A549 (cell line): ENCODE measurements at regions of chr16 and their contacts with region 1.

Region 1: DNA sequence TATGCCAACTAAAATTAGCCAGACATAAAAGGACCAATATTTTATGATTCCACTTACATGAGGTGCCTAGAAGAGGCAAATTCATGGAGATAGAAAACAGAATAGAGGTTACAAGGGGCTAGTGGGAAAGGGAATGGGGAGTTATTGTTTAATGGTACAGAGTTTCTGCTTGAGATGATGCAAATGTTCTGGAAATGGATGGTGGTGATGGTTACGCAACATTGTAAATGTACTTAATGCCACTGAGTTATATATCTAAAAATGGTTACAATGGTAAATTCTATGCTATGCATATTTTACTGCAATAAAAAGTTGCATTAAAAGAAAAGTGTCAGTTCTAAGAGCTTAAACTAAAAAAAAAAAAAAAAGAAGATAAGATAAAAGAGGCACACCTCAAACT is 17.9 kb downstream of the MT1X start:
- DNase-seq: no peak
- ATAC-seq: no peak
- H3K4me3 ChIP-seq: no peak overlapping the region
- H3K27ac ChIP-seq: no peak overlapping the region; a peak in 1 of 6 replicates
- H3K4me1 ChIP-seq: peaks cover 2% of the 10 kb centered on the region; the same call in 1 of the 3 replicates
- CTCF ChIP-seq: no peak
- EP300 ChIP-seq: no peak
- POLR2A ChIP-seq: no peak
- RAD21 ChIP-seq: no peak

Region 2: DNA sequence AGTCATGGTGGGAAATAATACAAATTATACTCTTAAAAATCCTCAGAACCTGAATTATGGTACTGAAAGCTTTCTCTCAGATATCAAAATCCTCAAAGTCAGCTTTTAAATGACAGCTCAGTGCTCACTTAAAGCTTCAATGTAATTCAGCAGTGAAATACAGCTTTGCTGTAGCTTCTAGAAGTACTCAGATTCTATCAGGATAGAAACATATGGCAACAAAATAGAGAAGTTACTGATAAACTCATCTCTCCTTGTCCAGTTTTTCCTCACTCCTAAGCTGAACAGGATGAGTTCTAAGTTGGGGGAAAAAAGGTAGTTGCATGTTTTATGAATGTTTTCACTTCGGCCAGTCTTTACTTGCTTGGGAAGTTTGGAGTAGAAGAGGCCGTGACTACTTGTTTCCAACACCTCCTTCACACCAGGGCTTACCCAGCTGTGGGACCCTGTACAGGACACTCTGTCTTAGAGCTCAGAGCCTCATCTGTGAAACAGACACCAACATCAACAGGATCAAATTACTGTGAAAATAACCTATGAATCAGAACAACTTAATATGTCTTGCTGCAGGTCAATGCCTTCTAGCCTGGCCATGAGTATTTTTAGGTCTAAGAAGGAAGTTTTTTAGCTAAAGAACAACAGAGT is 218.6 kb before region 1 on chr16:
- CTCF ChIA-PET with region 1: interaction called, 11 read pairs
- POLR2A ChIA-PET with region 1: no interaction called
- DNase-seq: no peak
- ATAC-seq: no peak
- H3K4me3 ChIP-seq: no peak overlapping the region
- H3K27ac ChIP-seq: no peak overlapping the region
- H3K4me1 ChIP-seq: peaks cover 13% of the 10 kb centered on the region; the same call in 2 of the 3 replicates
- CTCF ChIP-seq: no peak
- EP300 ChIP-seq: no peak
- POLR2A ChIP-seq: no peak
- RAD21 ChIP-seq: no peak

Region 3: DNA sequence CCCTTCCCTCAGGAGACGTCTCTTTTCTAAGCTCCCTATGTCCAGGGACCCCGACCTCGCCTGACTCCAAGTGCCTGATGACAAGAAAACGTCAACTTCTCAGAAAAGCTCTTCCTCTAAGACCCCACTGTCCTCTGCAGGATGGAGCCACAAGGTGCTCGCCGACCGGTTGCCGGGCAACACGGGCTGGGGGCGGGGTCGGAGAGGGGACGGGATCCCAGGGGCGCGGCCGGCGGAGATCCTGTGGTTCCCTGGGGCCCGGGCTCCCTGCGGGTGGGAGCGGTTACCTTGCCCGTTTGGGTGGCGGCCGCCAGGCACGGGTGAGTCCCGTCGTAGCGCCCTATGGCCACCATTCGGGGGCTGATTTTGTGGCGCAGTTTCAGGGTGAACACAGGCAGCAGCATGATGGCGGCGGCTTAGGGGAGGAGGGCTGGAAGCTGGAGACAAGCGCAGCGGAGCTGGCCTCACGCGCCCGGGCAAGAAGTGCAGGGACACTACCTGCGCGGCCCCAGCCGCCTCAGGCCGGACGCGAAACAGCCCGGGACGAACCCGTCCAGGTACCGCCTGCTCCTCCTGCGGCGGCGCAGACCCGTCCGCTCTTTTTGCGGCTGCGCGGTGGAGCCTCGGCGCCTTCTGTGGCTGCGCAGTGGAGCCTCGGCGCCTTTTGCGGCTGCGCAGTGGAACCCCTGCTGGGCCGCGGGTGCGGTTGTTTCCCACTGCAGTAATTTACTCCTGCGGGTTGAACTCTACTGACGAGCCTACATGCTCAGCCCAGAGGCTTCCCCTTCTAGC is 180.5 kb before region 1 on chr16 and contains the start of gene BBS2:
- CTCF ChIA-PET with region 1: interaction called, 44 read pairs
- POLR2A ChIA-PET with region 1: no interaction called
- DNase-seq: peak; percentile 84 to 86
- ATAC-seq: peak; percentile 94 to 98
- H3K4me3 ChIP-seq: peak within 1 kb of the TSS; percentile 79
- H3K27ac ChIP-seq: peak within 1 kb of the TSS; percentile 91 to 95
- H3K4me1 ChIP-seq: peaks cover 14% of the 10 kb centered on the region; the same call in 2 of the 3 replicates
- CTCF ChIP-seq: no peak
- EP300 ChIP-seq: no peak
- POLR2A ChIP-seq: peak; percentile 92
- RAD21 ChIP-seq: no peak
- polyA plus RNA-seq, gene BBS2: 61.4 and 62.3 TPM in 2 replicates

Region 4: DNA sequence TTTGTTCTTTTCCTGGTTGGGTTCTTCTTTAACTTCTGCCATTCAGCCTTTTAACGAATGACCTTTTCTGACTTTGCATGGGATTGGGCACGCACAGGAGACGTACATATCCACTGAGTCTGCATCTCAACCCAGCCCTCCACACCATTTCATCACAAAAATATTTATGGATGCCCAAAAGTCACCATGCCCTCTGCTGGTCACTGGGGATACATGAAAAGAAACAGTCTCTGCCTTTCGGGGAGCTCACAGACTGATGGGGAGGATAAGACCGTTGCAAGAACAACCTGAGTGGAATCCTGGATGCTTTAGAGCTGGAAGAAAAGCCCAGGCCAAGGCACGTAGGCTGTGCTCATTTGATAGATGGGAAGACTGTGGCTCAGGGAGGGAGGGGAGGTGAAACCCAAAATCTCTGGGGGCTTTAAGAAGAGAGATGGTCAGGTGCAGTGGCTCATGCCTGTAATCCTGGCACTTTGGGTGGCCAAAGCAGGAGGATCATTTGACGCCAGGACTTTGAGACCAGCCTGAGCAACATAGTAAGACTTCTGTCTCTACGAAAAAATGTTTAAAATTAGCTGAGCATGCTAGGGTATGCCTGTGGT is 99.7 kb before region 1 on chr16:
- CTCF ChIA-PET with region 1: interaction called, 104 read pairs
- POLR2A ChIA-PET with region 1: interaction called, 6 read pairs
- DNase-seq: peak; percentile 69 to 87
- ATAC-seq: peak; percentile 84 to 87
- H3K4me3 ChIP-seq: no peak overlapping the region
- H3K27ac ChIP-seq: peak overlapping the region; percentile 34 to 61; a peak in 4 of 6 replicates
- H3K4me1 ChIP-seq: peaks cover 12% of the 10 kb centered on the region
- CTCF ChIP-seq: peak; percentile 74
- EP300 ChIP-seq: no peak
- POLR2A ChIP-seq: no peak
- RAD21 ChIP-seq: peak; percentile 68 to 69

Region 5: DNA sequence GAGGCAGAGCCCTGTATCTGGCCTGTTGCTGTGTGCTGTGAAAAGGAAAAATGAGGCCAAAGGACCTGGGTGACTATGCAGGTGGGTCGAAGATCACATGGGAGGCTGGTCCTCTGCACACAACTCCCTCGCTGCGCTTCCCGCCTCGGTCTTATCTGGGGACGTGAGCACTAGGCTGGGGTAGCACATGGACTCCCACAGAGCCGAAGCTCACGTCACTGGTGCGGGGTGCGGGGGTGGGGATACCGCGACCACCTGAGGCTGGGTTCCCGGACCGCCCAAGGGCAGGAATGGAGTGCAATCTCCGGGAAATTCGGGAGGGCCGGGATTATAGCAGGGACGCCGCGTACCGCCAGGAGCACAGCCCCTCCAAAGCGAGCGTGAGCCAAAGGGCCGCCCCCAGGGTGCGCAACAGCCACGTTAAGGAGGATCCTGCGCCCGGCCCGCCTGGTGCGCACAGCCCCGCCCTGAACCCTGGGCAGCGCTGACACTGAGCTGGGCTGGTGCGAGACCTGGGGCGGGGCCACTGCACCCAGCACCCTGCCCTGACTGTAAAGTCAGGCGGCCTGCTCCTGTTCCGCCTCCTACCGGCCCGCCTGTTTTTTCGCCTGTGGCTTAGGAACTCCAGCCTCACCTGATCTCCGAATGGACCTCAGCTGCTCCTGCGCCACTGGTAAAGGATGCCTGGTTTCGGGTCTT is 57.0 kb before region 1 on chr16:
- CTCF ChIA-PET with region 1: interaction called, 36 read pairs
- POLR2A ChIA-PET with region 1: no interaction called
- DNase-seq: peak; percentile 80 to 85
- ATAC-seq: peak; percentile 97 to 100
- H3K4me3 ChIP-seq: peak overlapping the region; percentile 38
- H3K27ac ChIP-seq: peak overlapping the region; percentile 72 to 90
- H3K4me1 ChIP-seq: peaks cover 10% of the 10 kb centered on the region; the same call in 2 of the 3 replicates
- CTCF ChIP-seq: peak; percentile 51
- EP300 ChIP-seq: no peak
- POLR2A ChIP-seq: no peak
- RAD21 ChIP-seq: peak; percentile 60 to 67

Region 6: DNA sequence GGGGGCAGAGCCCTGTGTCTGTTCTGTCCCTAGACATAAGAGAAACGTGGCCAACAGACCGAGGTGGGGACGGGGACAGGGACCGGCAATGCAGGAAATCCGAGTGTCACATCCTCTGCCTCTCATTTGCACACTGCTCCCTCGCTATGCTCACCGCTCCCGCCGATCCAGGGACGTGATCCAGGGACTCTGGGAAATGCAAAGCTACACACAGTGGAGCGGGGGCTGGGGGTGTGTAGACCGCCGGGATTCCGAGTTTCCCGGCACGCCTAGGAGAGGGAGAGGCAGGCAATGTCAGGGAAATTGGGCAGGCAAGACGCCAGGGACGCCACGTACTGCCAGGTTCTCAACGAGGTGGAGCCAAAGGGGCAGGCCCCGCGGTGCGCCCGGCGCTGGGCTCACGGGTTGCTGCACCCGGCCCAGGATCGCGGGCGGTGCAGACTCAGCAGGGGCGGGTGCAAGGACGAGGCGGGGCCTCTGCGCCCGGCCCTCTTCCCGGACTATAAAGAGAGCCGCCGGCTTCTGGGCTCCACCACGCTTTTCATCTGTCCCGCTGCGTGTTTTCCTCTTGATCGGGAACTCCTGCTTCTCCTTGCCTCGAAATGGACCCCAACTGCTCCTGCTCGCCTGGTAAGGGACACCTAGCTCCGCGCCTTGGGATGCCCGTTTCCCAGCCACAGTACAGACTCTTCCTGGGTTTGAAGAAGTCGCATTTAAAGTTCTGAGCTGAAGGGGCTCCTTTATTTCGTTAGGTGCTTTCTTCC is 18.1 kb before region 1 on chr16 and contains the start of gene MT1X:
- CTCF ChIA-PET with region 1: interaction called, 42 read pairs
- POLR2A ChIA-PET with region 1: interaction called, 17 read pairs
- DNase-seq: peak; percentile 85 to 89
- ATAC-seq: peak; percentile 96 to 99
- H3K4me3 ChIP-seq: peak within 1 kb of the TSS; percentile 60
- H3K27ac ChIP-seq: peak within 1 kb of the TSS; percentile 84 to 85
- H3K4me1 ChIP-seq: peaks cover 9% of the 10 kb centered on the region; the same call in 2 of the 3 replicates
- CTCF ChIP-seq: no peak
- EP300 ChIP-seq: no peak
- POLR2A ChIP-seq: peak; percentile 75
- RAD21 ChIP-seq: no peak
- polyA plus RNA-seq, gene MT1X: 44.0 and 74.5 TPM in 2 replicates

Region 7: GRCh38 chr16:56824331-56824730 is 124.1 kb after region 1 on chr16:
- CTCF ChIA-PET with region 1: no interaction called
- POLR2A ChIA-PET with region 1: no interaction called
- DNase-seq: peak; percentile 30 to 39
- ATAC-seq: peak; percentile 93
- H3K4me3 ChIP-seq: no peak overlapping the region
- H3K27ac ChIP-seq: no peak overlapping the region
- H3K4me1 ChIP-seq: no peaks in the 10 kb centered on the region
- CTCF ChIP-seq: no peak
- EP300 ChIP-seq: no peak
- POLR2A ChIP-seq: no peak
- RAD21 ChIP-seq: 0 out of 5 replicates have a peak, but pooled peaks of 1 of the 2 experiments have one; percentile 13

Region 8: GRCh38 chr16:56884026-56884582 is 183.9 kb after region 1 on chr16:
- CTCF ChIA-PET with region 1: no interaction called
- POLR2A ChIA-PET with region 1: no interaction called
- DNase-seq: no peak
- ATAC-seq: no peak
- H3K4me3 ChIP-seq: no peak overlapping the region
- H3K27ac ChIP-seq: no peak overlapping the region
- H3K4me1 ChIP-seq: no peaks in the 10 kb centered on the region
- CTCF ChIP-seq: no peak
- EP300 ChIP-seq: no peak
- POLR2A ChIP-seq: no peak
- RAD21 ChIP-seq: no peak